ENCODE measurements at regions of chr13 and their contacts with region 1.

Region 1: DNA sequence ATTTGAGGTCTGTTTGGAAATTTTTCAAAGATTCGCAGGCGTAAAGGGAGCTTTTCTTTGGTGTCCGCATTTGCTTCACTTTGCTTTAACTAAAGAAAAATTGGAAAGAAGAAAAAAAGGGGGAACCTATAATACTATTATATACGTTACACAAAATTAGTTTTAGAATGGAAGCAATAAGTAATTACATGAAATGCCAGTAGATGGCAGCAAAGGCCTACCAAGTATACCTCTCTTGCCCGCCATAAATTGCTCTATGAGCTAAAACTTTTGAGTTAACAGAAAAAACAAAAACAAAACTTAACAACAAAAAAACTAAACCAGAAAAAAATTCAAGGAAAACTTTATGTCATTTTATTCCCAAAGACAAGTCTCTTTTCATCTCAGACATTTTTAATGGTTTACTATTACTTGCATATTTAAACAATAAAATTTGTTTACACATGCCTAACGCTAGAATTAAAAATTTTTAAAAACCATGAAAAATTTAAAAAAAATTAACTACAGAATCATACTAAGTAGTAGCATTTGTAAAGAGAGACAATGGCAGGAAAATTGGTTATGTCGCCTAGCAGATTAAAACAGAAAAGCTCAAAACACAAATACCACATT is 271.4 kb downstream of the NALCN start:
- DNase-seq: peak in 4 of 5 donors; percentile 35 to 45 (median 41)
- H3K4me3 ChIP-seq: no peak overlapping the region
- H3K4me3 Mint-ChIP-seq: no peak overlapping the region
- H3K27ac ChIP-seq: no peak overlapping the region
- H3K27ac Mint-ChIP-seq: no peak overlapping the region
- H3K4me1 ChIP-seq: no peaks in the 10 kb centered on the region
- H3K4me1 Mint-ChIP-seq: no peaks in the 10 kb centered on the region
- H3K27me3 ChIP-seq: no peaks in the 10 kb centered on the region
- H3K27me3 Mint-ChIP-seq: peaks cover 17 to 37% of the 10 kb centered on the region in 2 donors

Region 2: DNA sequence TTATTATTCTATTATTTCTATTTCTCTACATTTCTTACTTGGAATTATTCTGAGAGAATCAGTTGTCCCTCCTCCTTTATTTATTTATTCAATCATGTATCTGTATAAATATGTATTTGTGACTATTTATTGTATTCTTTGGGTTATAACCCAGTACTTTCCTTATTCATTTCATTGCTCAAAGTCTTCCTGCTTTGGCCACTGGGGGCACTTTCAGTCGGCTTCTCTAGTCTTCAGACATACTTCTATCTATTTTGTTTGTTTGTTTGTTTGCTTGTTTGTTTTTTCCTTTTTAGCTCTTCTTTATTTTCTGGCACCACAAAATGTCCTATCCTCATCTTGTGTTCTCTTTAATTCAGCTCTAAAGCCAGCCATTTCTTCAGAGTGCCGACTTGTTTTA is 11.0 kb after region 1 on chr13:
- CTCF ChIA-PET with region 1: interaction called, 46 read pairs
- POLR2A ChIA-PET with region 1: no interaction called
- intact Hi-C with region 1: no loop called
- DNase-seq: no peak
- H3K4me3 ChIP-seq: no peak overlapping the region
- H3K4me3 Mint-ChIP-seq: no peak overlapping the region
- H3K27ac ChIP-seq: no peak overlapping the region
- H3K27ac Mint-ChIP-seq: no peak overlapping the region
- H3K4me1 ChIP-seq: no peaks in the 10 kb centered on the region
- H3K4me1 Mint-ChIP-seq: peaks cover 0 to 4% (median under 1%) of the 10 kb centered on the region in 4 donors
- H3K27me3 ChIP-seq: no peaks in the 10 kb centered on the region
- H3K27me3 Mint-ChIP-seq: peaks cover 11 to 17% of the 10 kb centered on the region in 2 donors

Region 3: GRCh38 chr13:101514788-101515187 is 369.9 kb after region 1 on chr13:
- CTCF ChIA-PET with region 1: no interaction called
- POLR2A ChIA-PET with region 1: no interaction called
- intact Hi-C with region 1: loop called (anchors 2 kb)
- DNase-seq: peak in 4 of 5 donors; percentile 32 to 34 (median 32)
- H3K4me3 ChIP-seq: no peak overlapping the region
- H3K4me3 Mint-ChIP-seq: no peak overlapping the region
- H3K27ac ChIP-seq: no peak overlapping the region
- H3K27ac Mint-ChIP-seq: no peak overlapping the region
- H3K4me1 ChIP-seq: peaks cover 12% of the 10 kb centered on the region
- H3K4me1 Mint-ChIP-seq: peaks cover 7 to 13% (median 10%) of the 10 kb centered on the region in 4 donors
- H3K27me3 ChIP-seq: no peaks in the 10 kb centered on the region
- H3K27me3 Mint-ChIP-seq: peaks cover 0 to 2% of the 10 kb centered on the region in 2 donors

Region 4: GRCh38 chr13:101757446-101758039 is 612.6 kb after region 1 on chr13:
- CTCF ChIA-PET with region 1: interaction called, 3 read pairs
- POLR2A ChIA-PET with region 1: no interaction called
- intact Hi-C with region 1: loop called (anchors 1 kb)
- DNase-seq: peak in 4 of 5 donors; percentile 22 to 35 (median 30)
- H3K4me3 ChIP-seq: no peak overlapping the region
- H3K4me3 Mint-ChIP-seq: no peak overlapping the region
- H3K27ac ChIP-seq: no peak overlapping the region
- H3K27ac Mint-ChIP-seq: no peak overlapping the region
- H3K4me1 ChIP-seq: no peaks in the 10 kb centered on the region
- H3K4me1 Mint-ChIP-seq: no peaks in the 10 kb centered on the region
- H3K27me3 ChIP-seq: no peaks in the 10 kb centered on the region
- H3K27me3 Mint-ChIP-seq: peaks cover 11 to 14% of the 10 kb centered on the region in 2 donors

Region 5: DNA sequence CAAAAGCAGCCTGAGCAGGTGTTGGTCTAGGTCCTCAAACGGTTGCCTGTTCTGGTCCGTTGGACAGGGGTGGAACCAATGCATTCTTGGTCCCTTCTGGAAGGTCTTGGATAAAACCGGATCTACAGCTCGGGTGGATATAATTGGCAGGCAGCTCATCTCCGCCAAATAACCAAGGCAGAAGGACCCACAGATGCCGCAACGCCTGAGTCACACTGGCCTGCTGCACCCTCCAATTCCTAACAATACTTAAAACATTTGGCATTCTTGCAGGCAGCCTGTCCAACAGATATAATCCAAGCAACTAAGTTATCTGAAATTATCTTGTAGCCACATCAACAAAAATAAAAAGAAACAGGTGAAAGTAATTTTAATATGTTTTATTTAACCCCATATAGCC is 1315.9 kb after region 1 on chr13:
- CTCF ChIA-PET with region 1: interaction called, 14 read pairs
- POLR2A ChIA-PET with region 1: no interaction called
- intact Hi-C with region 1: no loop called
- DNase-seq: no peak
- H3K4me3 ChIP-seq: no peak overlapping the region
- H3K4me3 Mint-ChIP-seq: no peak overlapping the region
- H3K27ac ChIP-seq: no peak overlapping the region
- H3K27ac Mint-ChIP-seq: no peak overlapping the region
- H3K4me1 ChIP-seq: no peaks in the 10 kb centered on the region
- H3K4me1 Mint-ChIP-seq: peaks cover 4 to 6% (median 5%) of the 10 kb centered on the region in 4 donors
- H3K27me3 ChIP-seq: no peaks in the 10 kb centered on the region
- H3K27me3 Mint-ChIP-seq: peaks cover 10 to 11% of the 10 kb centered on the region in 2 donors

Region 6: GRCh38 chr13:102555917-102556553 is 1411.1 kb after region 1 on chr13:
- CTCF ChIA-PET with region 1: interaction called, 31 read pairs
- POLR2A ChIA-PET with region 1: no interaction called
- intact Hi-C with region 1: no loop called
- DNase-seq: peak in 4 of 5 donors; percentile 22 to 40 (median 32)
- H3K4me3 ChIP-seq: no peak overlapping the region
- H3K4me3 Mint-ChIP-seq: no peak overlapping the region
- H3K27ac ChIP-seq: no peak overlapping the region
- H3K27ac Mint-ChIP-seq: no peak overlapping the region
- H3K4me1 ChIP-seq: no peaks in the 10 kb centered on the region
- H3K4me1 Mint-ChIP-seq: peaks cover 0 to 4% (median 1%) of the 10 kb centered on the region in 4 donors
- H3K27me3 ChIP-seq: no peaks in the 10 kb centered on the region
- H3K27me3 Mint-ChIP-seq: no peaks in the 10 kb centered on the region